Right lobe of liver (tissue), 6 donors: ENCODE measurements at regions of chr2 and their contacts with region 1.

Region 1: GRCh38 chr2:215409331-215410127 is 26.3 kb downstream of the FN1 start:
- DNase-seq: no peak
- ATAC-seq: peak in 3 of 4 donors; percentile 10 to 25 (median 10)
- H3K4me3 ChIP-seq: no peak overlapping the region
- H3K27ac ChIP-seq: peak overlapping the region in 1 of 3 donors; percentile 15
- H3K4me1 ChIP-seq: peaks cover 0 to 10% (median 2%) of the 10 kb centered on the region in 4 donors
- H3K27me3 ChIP-seq: no peaks in the 10 kb centered on the region
- CTCF ChIP-seq: no peak
- POLR2A ChIP-seq: no peak

Region 2: DNA sequence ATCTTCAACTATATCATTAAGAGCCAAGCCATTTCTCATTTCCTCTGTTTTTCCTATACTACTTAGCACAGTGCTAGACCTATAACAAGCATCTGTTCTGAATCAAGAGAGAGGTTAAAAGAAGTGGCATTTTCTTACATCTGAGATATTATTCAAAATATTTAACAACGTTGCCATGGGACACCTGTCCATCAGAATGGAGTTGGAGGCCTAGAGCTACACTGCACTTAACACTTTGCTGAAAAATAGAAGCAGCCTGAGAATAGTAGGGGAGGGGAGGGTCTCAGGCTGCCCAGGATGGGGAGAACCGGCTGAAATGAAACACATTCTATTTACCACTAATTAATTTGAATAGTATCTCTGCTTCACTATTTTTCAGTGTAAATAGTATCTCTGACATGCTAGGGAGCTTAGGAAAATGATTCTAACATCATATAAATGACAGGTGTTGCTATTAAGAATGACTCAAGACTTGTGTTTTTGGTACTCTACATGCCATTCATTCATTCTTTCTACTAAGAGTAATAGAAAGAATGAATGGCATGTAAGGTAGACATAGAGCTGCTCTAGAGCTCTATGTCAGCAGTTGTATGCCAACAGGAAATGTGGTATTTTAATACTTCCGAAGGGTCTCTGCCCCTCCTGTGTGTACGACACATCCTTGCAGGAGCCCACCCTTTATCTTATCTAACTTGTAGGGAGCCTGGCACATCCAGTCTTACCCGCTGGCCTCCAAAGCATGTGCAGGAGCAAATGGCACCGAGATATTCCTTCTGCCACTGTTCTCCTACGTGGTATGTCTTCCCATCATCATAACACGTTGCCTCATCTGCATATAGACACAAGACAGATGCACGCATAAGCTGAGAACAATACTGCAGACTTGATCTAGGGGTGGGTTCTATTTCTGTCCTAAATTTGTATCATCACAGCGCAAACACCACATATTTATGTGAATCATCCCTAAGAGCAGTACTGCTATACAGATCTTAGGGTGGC is 45.1 kb before region 1 on chr2:
- intact Hi-C with region 1: loop called in 1 of 2 experiments (anchors 5 kb)
- DNase-seq: no peak
- ATAC-seq: no peak
- H3K4me3 ChIP-seq: no peak overlapping the region
- H3K27ac ChIP-seq: no peak overlapping the region
- H3K4me1 ChIP-seq: no peaks in the 10 kb centered on the region
- H3K27me3 ChIP-seq: no peaks in the 10 kb centered on the region
- CTCF ChIP-seq: no peak
- POLR2A ChIP-seq: no peak